ENCODE measurements at regions of chr14 and their contacts with region 1.

Region 1: GRCh38 chr14:43449377-43450080 is 1057.6 kb downstream of the FSCB start:
- H3K4me3 Mint-ChIP-seq: no peak overlapping the region
- H3K27ac Mint-ChIP-seq: no peak overlapping the region
- H3K4me1 Mint-ChIP-seq: no peaks in the 10 kb centered on the region
- H3K27me3 Mint-ChIP-seq: no peaks in the 10 kb centered on the region

Region 2: GRCh38 chr14:43042396-43042795 is 407.1 kb before region 1 on chr14:
- intact Hi-C with region 1: no loop called
- H3K4me3 Mint-ChIP-seq: no peak overlapping the region
- H3K27ac Mint-ChIP-seq: no peak overlapping the region
- H3K4me1 Mint-ChIP-seq: no peaks in the 10 kb centered on the region
- H3K27me3 Mint-ChIP-seq: no peaks in the 10 kb centered on the region

Region 3: GRCh38 chr14:43316427-43316826 is 133.1 kb before region 1 on chr14:
- intact Hi-C with region 1: loop called (anchors 10 kb)
- H3K4me3 Mint-ChIP-seq: no peak overlapping the region
- H3K27ac Mint-ChIP-seq: no peak overlapping the region
- H3K4me1 Mint-ChIP-seq: no peaks in the 10 kb centered on the region
- H3K27me3 Mint-ChIP-seq: no peaks in the 10 kb centered on the region